ENCODE measurements at regions of chr1 and their contacts with region 1.

Region 1: GRCh38 chr1:100866041-100866900 is 28.4 kb downstream of the EXTL2 start:
- DNase-seq: no peak
- H3K4me3 ChIP-seq: no peak overlapping the region
- H3K27ac ChIP-seq: no peak overlapping the region
- H3K4me1 ChIP-seq: no peaks in the 10 kb centered on the region
- H3K27me3 ChIP-seq: no peaks in the 10 kb centered on the region
- CTCF ChIP-seq: peak in 4 of 6 experiments; percentile 5 to 42 (median 29)
- POLR2A ChIP-seq: no peak

Region 2: GRCh38 chr1:99808391-99809115 is 1057.7 kb before region 1 on chr1:
- intact Hi-C with region 1: loop called (anchors 10 kb)
- DNase-seq: peak in 1 of 2 donors; percentile 5
- H3K4me3 ChIP-seq: no peak overlapping the region
- H3K27ac ChIP-seq: peak overlapping the region in 2 of 3 donors; percentile 59 to 60
- H3K4me1 ChIP-seq: no peaks in the 10 kb centered on the region
- H3K27me3 ChIP-seq: no peaks in the 10 kb centered on the region
- CTCF ChIP-seq: peak in 5 of 6 experiments; percentile 37 to 84 (median 71)
- POLR2A ChIP-seq: no peak

Region 3: DNA sequence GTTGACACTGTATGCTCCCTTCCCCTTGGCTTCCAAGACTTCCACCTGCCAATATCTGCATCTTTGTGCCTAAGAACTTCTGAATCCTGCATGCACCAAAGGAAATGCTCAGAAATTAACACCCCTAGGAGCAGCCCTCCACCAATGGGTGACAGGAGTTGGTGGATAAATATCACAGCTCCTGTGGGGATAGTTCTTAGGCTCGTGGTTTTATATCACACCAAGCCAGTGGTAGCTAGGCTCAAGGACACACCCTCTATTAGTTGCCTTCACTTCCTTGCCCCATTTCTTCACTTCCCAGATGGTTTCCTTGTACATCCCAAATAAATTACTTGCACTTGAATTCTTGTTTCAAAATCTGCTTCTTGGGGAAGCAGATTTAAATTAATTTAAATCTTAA is 530.8 kb before region 1 on chr1:
- intact Hi-C with region 1: no loop called
- DNase-seq: no peak
- H3K4me3 ChIP-seq: no peak overlapping the region
- H3K27ac ChIP-seq: no peak overlapping the region
- H3K4me1 ChIP-seq: no peaks in the 10 kb centered on the region
- H3K27me3 ChIP-seq: no peaks in the 10 kb centered on the region
- CTCF ChIP-seq: no peak
- POLR2A ChIP-seq: no peak

Region 4: GRCh38 chr1:100459358-100460114 is 406.7 kb before region 1 on chr1:
- intact Hi-C with region 1: loop called (anchors 10 kb)
- DNase-seq: peak; percentile 74 to 82
- H3K4me3 ChIP-seq: no peak overlapping the region
- H3K27ac ChIP-seq: no peak overlapping the region
- H3K4me1 ChIP-seq: peaks cover 0 to 6% of the 10 kb centered on the region in 2 donors
- H3K27me3 ChIP-seq: no peaks in the 10 kb centered on the region
- CTCF ChIP-seq: peak; percentile 66 to 90 (median 83)
- POLR2A ChIP-seq: no peak

Region 5: DNA sequence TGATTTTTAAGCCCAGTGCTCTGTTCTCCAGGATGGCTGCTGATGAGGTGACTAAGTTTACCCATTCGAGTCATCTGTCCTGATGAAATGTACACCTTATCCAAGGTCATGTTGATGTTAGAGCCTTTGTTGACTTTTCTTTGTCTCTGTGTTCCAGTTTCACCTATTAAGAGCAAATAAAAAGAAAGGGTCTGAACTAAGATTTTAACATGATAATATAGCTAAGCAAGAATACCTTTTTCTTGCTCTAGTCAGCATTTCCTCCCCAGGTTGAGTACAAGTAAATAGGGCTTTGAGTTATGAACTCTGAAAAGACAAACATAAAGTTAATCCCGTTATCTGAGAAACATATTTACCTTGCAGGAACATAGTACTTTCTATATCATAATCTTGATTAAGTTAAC is 380.4 kb before region 1 on chr1:
- intact Hi-C with region 1: no loop called
- DNase-seq: no peak
- H3K4me3 ChIP-seq: no peak overlapping the region
- H3K27ac ChIP-seq: no peak overlapping the region
- H3K4me1 ChIP-seq: no peaks in the 10 kb centered on the region
- H3K27me3 ChIP-seq: no peaks in the 10 kb centered on the region
- CTCF ChIP-seq: no peak
- POLR2A ChIP-seq: no peak

Region 6: DNA sequence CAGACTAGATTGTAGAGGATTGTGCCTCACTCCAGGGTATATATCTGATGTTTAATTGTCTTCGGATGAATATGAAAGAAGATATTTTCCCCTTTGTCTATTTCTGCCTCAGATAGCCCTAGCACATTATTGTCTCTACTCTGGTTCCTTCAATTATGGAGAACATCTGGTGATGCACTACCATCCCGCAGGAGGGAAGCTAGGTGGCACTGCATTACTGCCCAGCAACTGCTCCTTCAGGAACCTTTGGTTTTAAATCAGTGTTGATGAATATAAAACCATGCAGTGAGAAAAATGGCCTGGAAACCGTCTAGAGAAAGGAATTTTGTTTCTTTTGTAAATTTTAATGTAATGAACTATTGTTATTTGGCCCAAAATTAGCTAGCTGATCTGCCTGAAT is 259.8 kb before region 1 on chr1:
- intact Hi-C with region 1: loop called (anchors 10 kb)
- DNase-seq: no peak
- H3K4me3 ChIP-seq: no peak overlapping the region
- H3K27ac ChIP-seq: no peak overlapping the region
- H3K4me1 ChIP-seq: no peaks in the 10 kb centered on the region
- H3K27me3 ChIP-seq: no peaks in the 10 kb centered on the region
- CTCF ChIP-seq: peak in 1 of 6 experiments; percentile 27
- POLR2A ChIP-seq: no peak

Region 7: DNA sequence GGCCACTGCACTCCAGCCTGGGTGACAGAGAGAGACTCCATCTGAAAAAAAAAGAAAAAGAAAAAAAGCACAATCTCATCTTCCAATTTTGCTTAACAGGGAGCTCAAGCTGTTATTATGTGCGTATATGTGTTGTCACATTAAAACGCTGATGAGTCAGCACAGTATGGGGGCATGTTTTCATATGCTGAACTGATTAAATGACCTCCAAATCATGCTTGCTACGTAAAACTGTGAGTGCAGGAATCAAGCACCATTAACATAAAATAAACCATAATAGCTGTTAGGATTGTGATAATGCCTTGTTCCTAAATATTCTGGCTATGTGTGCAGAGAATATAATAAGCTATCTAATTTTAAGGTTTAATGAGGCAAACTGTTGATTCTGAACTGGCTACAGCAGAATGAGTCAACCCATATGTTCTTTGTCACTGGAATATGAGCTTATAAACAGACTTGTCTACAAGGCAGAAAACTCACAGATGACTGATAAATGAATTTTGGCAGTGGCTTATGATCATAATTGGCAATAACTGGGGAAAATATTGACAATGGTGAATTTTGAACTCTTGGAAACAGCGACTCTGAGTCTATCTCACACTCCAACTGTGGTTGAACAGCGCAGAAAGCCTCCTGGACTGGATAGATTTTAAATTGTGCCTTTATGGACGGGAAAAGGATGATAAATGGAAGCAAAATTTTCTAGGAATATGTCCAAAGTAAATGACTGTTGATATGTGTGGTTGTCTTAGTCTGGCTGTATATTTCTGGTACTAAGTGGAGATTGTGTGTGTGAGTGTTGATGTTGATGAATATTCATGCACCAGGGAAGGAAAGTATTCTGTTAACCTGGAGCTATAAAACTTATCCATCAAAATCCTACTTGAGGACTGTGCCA is 71.3 kb before region 1 on chr1:
- intact Hi-C with region 1: no loop called
- DNase-seq: no peak
- H3K4me3 ChIP-seq: no peak overlapping the region
- H3K27ac ChIP-seq: no peak overlapping the region
- H3K4me1 ChIP-seq: no peaks in the 10 kb centered on the region
- H3K27me3 ChIP-seq: no peaks in the 10 kb centered on the region
- CTCF ChIP-seq: no peak
- POLR2A ChIP-seq: no peak